ENCODE measurements at regions of chr20 and their contacts with region 1.

Region 1: DNA sequence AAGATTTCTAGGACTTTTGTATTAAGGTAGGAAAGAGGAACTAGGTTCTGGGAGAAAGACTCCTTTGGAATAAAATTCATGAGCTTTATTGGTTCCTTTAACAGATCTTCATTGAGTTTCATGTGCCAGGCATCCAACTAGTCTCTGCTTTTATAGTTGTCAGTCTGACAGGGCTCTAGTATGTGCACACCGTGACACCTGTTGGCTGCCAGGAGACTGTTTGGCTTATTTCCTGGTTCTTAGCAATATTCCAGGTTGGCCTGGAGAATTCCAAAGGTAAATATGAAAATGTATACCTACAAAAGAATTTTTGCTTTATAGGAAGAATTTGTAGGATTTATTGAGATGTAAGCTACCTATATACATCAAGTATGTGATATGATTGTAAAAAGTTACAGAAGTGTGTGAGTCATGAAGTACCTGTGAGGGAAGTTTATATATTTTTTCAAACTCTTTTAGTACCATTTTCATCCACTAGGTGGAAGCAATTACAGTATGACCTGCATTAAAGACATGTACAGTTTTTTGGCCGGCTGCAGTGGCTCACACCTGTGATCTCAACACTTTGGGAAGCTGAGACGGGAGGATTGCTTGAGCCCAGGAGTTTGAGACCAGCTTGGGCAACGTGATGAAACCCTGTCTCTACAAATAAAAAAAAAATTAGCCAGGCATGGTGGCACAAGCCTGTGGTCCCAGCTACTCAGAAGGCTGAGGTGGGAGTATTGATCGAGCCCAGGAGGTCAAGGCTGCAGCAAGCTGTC is 35.2 kb downstream of the NDUFAF5 start:
- DNase-seq: peak in 4 of 5 donors; percentile 16 to 39 (median 24)
- H3K4me3 ChIP-seq: no peak overlapping the region
- H3K4me3 Mint-ChIP-seq: no peak overlapping the region
- H3K27ac ChIP-seq: no peak overlapping the region
- H3K27ac Mint-ChIP-seq: no peak overlapping the region
- H3K4me1 ChIP-seq: no peaks in the 10 kb centered on the region
- H3K4me1 Mint-ChIP-seq: no peaks in the 10 kb centered on the region
- H3K27me3 ChIP-seq: no peaks in the 10 kb centered on the region
- H3K27me3 Mint-ChIP-seq: no peaks in the 10 kb centered on the region

Region 2: GRCh38 chr20:13355411-13355810 is 464.7 kb before region 1 on chr20:
- CTCF ChIA-PET with region 1: no interaction called
- POLR2A ChIA-PET with region 1: no interaction called
- intact Hi-C with region 1: no loop called
- DNase-seq: no peak
- H3K4me3 ChIP-seq: no peak overlapping the region
- H3K4me3 Mint-ChIP-seq: no peak overlapping the region
- H3K27ac ChIP-seq: no peak overlapping the region
- H3K27ac Mint-ChIP-seq: no peak overlapping the region
- H3K4me1 ChIP-seq: no peaks in the 10 kb centered on the region
- H3K4me1 Mint-ChIP-seq: no peaks in the 10 kb centered on the region
- H3K27me3 ChIP-seq: no peaks in the 10 kb centered on the region
- H3K27me3 Mint-ChIP-seq: no peaks in the 10 kb centered on the region

Region 3: DNA sequence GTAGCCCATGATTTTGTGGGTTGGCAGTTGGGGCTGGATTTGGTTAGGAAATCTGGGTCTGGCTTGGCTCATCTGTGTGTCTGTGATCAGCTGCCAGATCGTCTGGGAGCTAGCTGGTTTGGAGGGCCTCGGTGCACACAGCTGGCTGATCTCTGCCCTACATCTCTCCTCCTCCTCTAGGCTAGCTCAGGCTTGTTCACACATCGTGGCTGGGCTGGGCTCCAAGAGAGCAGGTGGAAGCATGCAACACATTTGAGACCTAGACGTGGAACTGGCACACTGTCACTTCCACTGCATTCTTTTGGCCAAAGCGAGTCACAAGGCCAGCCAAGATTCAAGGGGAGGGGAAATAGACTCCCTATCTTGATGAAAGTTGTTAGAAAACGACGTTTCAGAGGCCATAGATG is 19.3 kb before region 1 on chr20:
- CTCF ChIA-PET with region 1: interaction called, 18 read pairs
- POLR2A ChIA-PET with region 1: no interaction called
- intact Hi-C with region 1: no loop called
- DNase-seq: no peak
- H3K4me3 ChIP-seq: no peak overlapping the region
- H3K4me3 Mint-ChIP-seq: no peak overlapping the region
- H3K27ac ChIP-seq: no peak overlapping the region
- H3K27ac Mint-ChIP-seq: no peak overlapping the region
- H3K4me1 ChIP-seq: no peaks in the 10 kb centered on the region
- H3K4me1 Mint-ChIP-seq: peaks cover 0 to 9% (median 8%) of the 10 kb centered on the region in 4 donors
- H3K27me3 ChIP-seq: no peaks in the 10 kb centered on the region
- H3K27me3 Mint-ChIP-seq: no peaks in the 10 kb centered on the region

Region 4: DNA sequence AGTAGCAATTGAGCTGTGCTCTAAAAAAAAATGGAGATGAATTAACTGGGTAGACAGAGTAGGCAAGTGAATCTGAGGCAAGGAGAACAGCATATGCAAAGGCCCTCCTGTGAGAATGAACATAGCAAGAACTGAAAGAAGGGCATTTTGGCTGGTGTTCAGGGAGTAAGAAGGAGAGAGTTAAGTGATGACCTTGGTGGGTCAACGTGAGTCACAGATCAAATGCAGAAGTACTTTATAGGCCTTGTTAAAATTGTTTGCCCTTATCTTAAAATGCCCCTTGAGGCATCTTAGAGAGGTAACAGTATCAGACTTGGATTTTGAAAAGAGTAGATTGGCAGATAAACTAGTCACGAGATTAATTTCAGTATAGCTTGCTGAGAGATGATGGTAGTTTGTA is 10.7 kb before region 1 on chr20:
- CTCF ChIA-PET with region 1: interaction called, 17 read pairs
- POLR2A ChIA-PET with region 1: no interaction called
- intact Hi-C with region 1: no loop called
- DNase-seq: no peak
- H3K4me3 ChIP-seq: no peak overlapping the region
- H3K4me3 Mint-ChIP-seq: no peak overlapping the region
- H3K27ac ChIP-seq: no peak overlapping the region
- H3K27ac Mint-ChIP-seq: no peak overlapping the region
- H3K4me1 ChIP-seq: no peaks in the 10 kb centered on the region
- H3K4me1 Mint-ChIP-seq: peaks cover 0 to 2% (median under 1%) of the 10 kb centered on the region in 4 donors
- H3K27me3 ChIP-seq: no peaks in the 10 kb centered on the region
- H3K27me3 Mint-ChIP-seq: no peaks in the 10 kb centered on the region

Region 5: GRCh38 chr20:14235355-14235754 is 415.3 kb after region 1 on chr20:
- CTCF ChIA-PET with region 1: no interaction called
- POLR2A ChIA-PET with region 1: no interaction called
- intact Hi-C with region 1: no loop called
- DNase-seq: no peak
- H3K4me3 ChIP-seq: no peak overlapping the region
- H3K4me3 Mint-ChIP-seq: no peak overlapping the region
- H3K27ac ChIP-seq: no peak overlapping the region
- H3K27ac Mint-ChIP-seq: no peak overlapping the region
- H3K4me1 ChIP-seq: no peaks in the 10 kb centered on the region
- H3K4me1 Mint-ChIP-seq: no peaks in the 10 kb centered on the region
- H3K27me3 ChIP-seq: no peaks in the 10 kb centered on the region
- H3K27me3 Mint-ChIP-seq: no peaks in the 10 kb centered on the region

Measured in CD4-positive, alpha-beta memory T cell (primary cell).